B cell (primary cell): ENCODE measurements at regions of chr3 and their contacts with region 1.

Region 1: DNA sequence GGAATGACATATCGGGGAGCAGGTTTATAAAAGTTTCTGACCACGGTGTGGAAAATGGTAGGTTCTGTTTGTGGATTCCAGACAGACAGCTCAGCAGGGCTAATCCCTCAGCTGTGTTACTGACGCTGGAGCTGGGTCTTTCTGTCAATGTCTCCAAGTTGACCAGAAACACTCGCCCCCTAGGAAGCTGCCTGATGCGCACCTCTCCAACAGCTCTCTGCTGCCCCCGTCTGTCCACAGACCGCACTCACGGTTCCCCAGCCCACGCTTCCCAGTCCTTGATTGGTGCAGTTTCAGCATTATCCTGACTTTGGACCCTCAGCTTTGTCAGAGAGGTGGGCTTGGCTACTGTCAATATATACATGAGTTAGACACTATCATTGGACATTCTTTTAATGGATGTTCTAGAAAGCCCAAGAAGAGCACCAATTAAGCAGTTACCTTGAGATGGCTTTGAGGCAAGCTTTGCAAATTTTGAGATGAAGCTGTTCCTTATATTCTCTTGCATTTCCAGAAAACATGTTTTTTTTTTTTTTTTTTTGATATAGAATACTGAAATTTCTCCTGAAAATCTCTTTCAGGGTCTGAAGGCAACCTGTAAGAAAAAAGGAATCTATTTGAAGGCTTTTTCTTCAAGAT is 98.9 kb upstream of the TBC1D5 start:
- DNase-seq: peak; percentile 77
- ATAC-seq: peak; percentile 83
- H3K4me3 ChIP-seq: no peak overlapping the region
- H3K4me3 Mint-ChIP-seq: no peak overlapping the region
- H3K27ac ChIP-seq: no peak overlapping the region
- H3K27ac Mint-ChIP-seq: no peak overlapping the region
- H3K4me1 ChIP-seq: peaks cover 0 to 3% of the 10 kb centered on the region in 2 donors
- H3K4me1 Mint-ChIP-seq: no peaks in the 10 kb centered on the region
- H3K27me3 ChIP-seq: no peaks in the 10 kb centered on the region
- H3K27me3 Mint-ChIP-seq: peaks cover 7% of the 10 kb centered on the region
- CTCF ChIP-seq: peak; percentile 97

Region 2: GRCh38 chr3:17258823-17259436 is 582.4 kb before region 1 on chr3:
- CTCF ChIA-PET with region 1: interaction called, 21 read pairs
- POLR2A ChIA-PET with region 1: no interaction called
- intact Hi-C with region 1: no loop called
- DNase-seq: peak; percentile 61
- ATAC-seq: no peak
- H3K4me3 ChIP-seq: no peak overlapping the region
- H3K4me3 Mint-ChIP-seq: no peak overlapping the region
- H3K27ac ChIP-seq: no peak overlapping the region
- H3K27ac Mint-ChIP-seq: no peak overlapping the region
- H3K4me1 ChIP-seq: no peaks in the 10 kb centered on the region
- H3K4me1 Mint-ChIP-seq: peaks cover 1% of the 10 kb centered on the region
- H3K27me3 ChIP-seq: no peaks in the 10 kb centered on the region
- H3K27me3 Mint-ChIP-seq: no peaks in the 10 kb centered on the region
- CTCF ChIP-seq: peak; percentile 96

Region 3: GRCh38 chr3:17290894-17291293 is 550.4 kb before region 1 on chr3:
- CTCF ChIA-PET with region 1: no interaction called
- POLR2A ChIA-PET with region 1: no interaction called
- intact Hi-C with region 1: no loop called
- DNase-seq: no peak
- ATAC-seq: no peak
- H3K4me3 ChIP-seq: no peak overlapping the region
- H3K4me3 Mint-ChIP-seq: no peak overlapping the region
- H3K27ac ChIP-seq: no peak overlapping the region
- H3K27ac Mint-ChIP-seq: no peak overlapping the region
- H3K4me1 ChIP-seq: no peaks in the 10 kb centered on the region
- H3K4me1 Mint-ChIP-seq: no peaks in the 10 kb centered on the region
- H3K27me3 ChIP-seq: no peaks in the 10 kb centered on the region
- H3K27me3 Mint-ChIP-seq: no peaks in the 10 kb centered on the region
- CTCF ChIP-seq: no peak

Region 4: GRCh38 chr3:17431004-17431403 is 410.3 kb before region 1 on chr3:
- CTCF ChIA-PET with region 1: interaction called, 85 read pairs
- POLR2A ChIA-PET with region 1: no interaction called
- intact Hi-C with region 1: loop called (anchors 1 kb)
- DNase-seq: peak; percentile 14
- ATAC-seq: no peak
- H3K4me3 ChIP-seq: no peak overlapping the region
- H3K4me3 Mint-ChIP-seq: no peak overlapping the region
- H3K27ac ChIP-seq: no peak overlapping the region
- H3K27ac Mint-ChIP-seq: no peak overlapping the region
- H3K4me1 ChIP-seq: no peaks in the 10 kb centered on the region
- H3K4me1 Mint-ChIP-seq: no peaks in the 10 kb centered on the region
- H3K27me3 ChIP-seq: no peaks in the 10 kb centered on the region
- H3K27me3 Mint-ChIP-seq: no peaks in the 10 kb centered on the region
- CTCF ChIP-seq: peak; percentile 67

Region 5: DNA sequence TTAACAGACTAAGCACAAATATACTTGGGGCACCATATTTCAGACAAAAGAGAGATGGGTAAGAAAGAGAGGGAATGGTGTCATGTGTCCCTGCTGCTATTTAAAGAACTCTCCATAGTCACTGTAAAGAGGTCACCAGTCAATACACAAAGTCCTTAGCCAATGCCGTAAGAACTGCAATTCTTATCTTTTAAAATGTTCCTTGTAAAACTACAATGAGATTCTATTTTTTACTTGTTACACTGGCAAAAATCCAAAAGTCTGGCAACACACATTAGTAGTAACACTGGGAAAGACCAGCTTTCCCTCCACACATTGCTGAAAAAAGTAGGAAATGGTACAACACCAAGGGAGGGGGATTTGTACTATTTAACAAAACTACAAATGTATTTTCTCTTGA is 288.2 kb before region 1 on chr3:
- CTCF ChIA-PET with region 1: interaction called, 10 read pairs
- POLR2A ChIA-PET with region 1: no interaction called
- intact Hi-C with region 1: loop called (anchors 10 kb)
- DNase-seq: no peak
- ATAC-seq: no peak
- H3K4me3 ChIP-seq: no peak overlapping the region
- H3K4me3 Mint-ChIP-seq: no peak overlapping the region
- H3K27ac ChIP-seq: no peak overlapping the region
- H3K27ac Mint-ChIP-seq: no peak overlapping the region
- H3K4me1 ChIP-seq: no peaks in the 10 kb centered on the region
- H3K4me1 Mint-ChIP-seq: peaks cover 7% of the 10 kb centered on the region
- H3K27me3 ChIP-seq: no peaks in the 10 kb centered on the region
- H3K27me3 Mint-ChIP-seq: no peaks in the 10 kb centered on the region
- CTCF ChIP-seq: no peak

Region 6: GRCh38 chr3:17645072-17645698 is 196.1 kb before region 1 on chr3:
- CTCF ChIA-PET with region 1: interaction called, 177 read pairs
- POLR2A ChIA-PET with region 1: no interaction called
- intact Hi-C with region 1: loop called (anchors 1 kb)
- DNase-seq: peak; percentile 53
- ATAC-seq: no peak
- H3K4me3 ChIP-seq: no peak overlapping the region
- H3K4me3 Mint-ChIP-seq: no peak overlapping the region
- H3K27ac ChIP-seq: no peak overlapping the region
- H3K27ac Mint-ChIP-seq: no peak overlapping the region
- H3K4me1 ChIP-seq: no peaks in the 10 kb centered on the region
- H3K4me1 Mint-ChIP-seq: peaks cover 12% of the 10 kb centered on the region
- H3K27me3 ChIP-seq: no peaks in the 10 kb centered on the region
- H3K27me3 Mint-ChIP-seq: no peaks in the 10 kb centered on the region
- CTCF ChIP-seq: peak; percentile 68

Region 7: DNA sequence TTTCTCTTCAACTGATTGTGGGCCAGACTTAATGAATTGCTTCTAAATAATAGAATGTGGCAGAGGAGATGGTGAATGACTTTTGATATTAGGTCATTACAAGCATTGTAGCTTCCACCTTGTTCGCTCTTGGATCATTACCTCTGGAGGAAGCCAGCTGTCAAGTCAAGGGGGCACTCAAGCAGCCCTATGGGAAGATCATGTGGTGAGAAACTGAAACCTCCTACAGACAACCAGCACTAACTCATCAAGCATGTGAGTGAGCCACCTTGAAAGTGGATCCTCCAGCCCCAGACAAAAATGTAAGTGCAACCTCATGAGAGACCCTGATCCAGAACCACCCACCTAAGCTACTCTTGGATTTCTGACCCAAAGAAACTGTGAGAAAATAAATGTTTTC is 10.9 kb after region 1 on chr3:
- CTCF ChIA-PET with region 1: interaction called, 13 read pairs
- POLR2A ChIA-PET with region 1: no interaction called
- intact Hi-C with region 1: no loop called
- DNase-seq: no peak
- ATAC-seq: no peak
- H3K4me3 ChIP-seq: no peak overlapping the region
- H3K4me3 Mint-ChIP-seq: no peak overlapping the region
- H3K27ac ChIP-seq: no peak overlapping the region
- H3K27ac Mint-ChIP-seq: no peak overlapping the region
- H3K4me1 ChIP-seq: no peaks in the 10 kb centered on the region
- H3K4me1 Mint-ChIP-seq: no peaks in the 10 kb centered on the region
- H3K27me3 ChIP-seq: no peaks in the 10 kb centered on the region
- H3K27me3 Mint-ChIP-seq: no peaks in the 10 kb centered on the region
- CTCF ChIP-seq: no peak

Region 8: GRCh38 chr3:18389108-18389733 is 547.9 kb after region 1 on chr3:
- CTCF ChIA-PET with region 1: interaction called, 10 read pairs
- POLR2A ChIA-PET with region 1: no interaction called
- intact Hi-C with region 1: no loop called
- DNase-seq: peak; percentile 62
- ATAC-seq: no peak
- H3K4me3 ChIP-seq: no peak overlapping the region
- H3K4me3 Mint-ChIP-seq: no peak overlapping the region
- H3K27ac ChIP-seq: no peak overlapping the region
- H3K27ac Mint-ChIP-seq: no peak overlapping the region
- H3K4me1 ChIP-seq: no peaks in the 10 kb centered on the region
- H3K4me1 Mint-ChIP-seq: no peaks in the 10 kb centered on the region
- H3K27me3 ChIP-seq: no peaks in the 10 kb centered on the region
- H3K27me3 Mint-ChIP-seq: no peaks in the 10 kb centered on the region
- CTCF ChIP-seq: peak; percentile 93